SK-N-SH (cell line): ENCODE measurements at regions of chr1 and their contacts with region 1.

Region 1: GRCh38 chr1:84181350-84182005 is 37.4 kb downstream of the PRKACB start:
- DNase-seq: no peak
- H3K4me3 ChIP-seq: no peak overlapping the region
- H3K27ac ChIP-seq: no peak overlapping the region
- H3K4me1 ChIP-seq: peaks cover 3 to 5% of the 10 kb centered on the region in 2 experiments; a peak in 3 of 4 replicates
- H3K27me3 ChIP-seq: no peaks in the 10 kb centered on the region
- CTCF ChIP-seq: no peak
- EP300 ChIP-seq: no peak
- RAD21 ChIP-seq: no peak

Region 2: DNA sequence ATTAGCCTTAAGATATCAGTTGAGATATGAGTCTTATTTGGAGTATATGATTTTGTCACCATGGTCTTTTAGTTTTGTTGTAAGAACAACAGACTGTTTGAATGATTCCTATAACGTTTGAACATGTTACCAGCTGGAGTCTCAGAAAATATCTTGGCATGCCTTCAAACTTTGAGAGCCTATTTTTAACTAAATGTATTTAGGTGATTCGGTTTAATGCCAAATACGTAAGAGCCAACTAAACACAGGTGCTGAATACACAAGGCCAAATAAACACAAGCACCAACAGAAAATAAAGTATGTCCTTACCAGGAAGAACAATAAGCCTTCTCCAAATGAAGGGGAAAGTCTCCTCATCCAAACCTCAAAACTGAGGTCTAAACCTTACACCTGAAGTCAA is 11.2 kb after region 1 on chr1:
- CTCF ChIA-PET with region 1: interaction called, 12 read pairs
- POLR2A ChIA-PET with region 1: no interaction called
- DNase-seq: no peak
- H3K4me3 ChIP-seq: no peak overlapping the region
- H3K27ac ChIP-seq: no peak overlapping the region
- H3K4me1 ChIP-seq: no peaks in the 10 kb centered on the region
- H3K27me3 ChIP-seq: no peaks in the 10 kb centered on the region
- CTCF ChIP-seq: no peak
- EP300 ChIP-seq: no peak
- RAD21 ChIP-seq: no peak